HepG2 (cell line): ENCODE measurements at regions of chr4 and their contacts with region 1.

Region 1: DNA sequence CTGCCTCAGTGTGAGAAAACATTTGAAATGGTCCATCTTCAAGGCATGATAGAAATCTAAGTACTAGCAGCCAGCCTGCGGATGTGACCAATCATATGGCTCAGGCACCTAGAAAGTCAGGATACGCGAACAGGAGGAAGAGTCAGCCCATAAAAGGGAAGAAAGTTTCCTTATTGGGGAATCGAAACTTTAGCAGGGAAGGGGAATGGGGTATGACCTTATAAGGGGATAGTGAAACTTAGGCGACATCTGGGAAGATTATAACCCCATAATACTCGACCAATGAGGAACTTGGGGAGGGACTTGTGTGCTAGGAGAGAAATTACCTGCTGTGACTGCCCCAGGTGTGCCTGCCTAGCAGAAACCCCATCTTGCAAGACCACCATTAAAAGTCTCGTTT is 26.2 kb upstream of the PYURF start:
- DNase-seq: no peak
- ATAC-seq: no peak
- H3K4me3 ChIP-seq: no peak overlapping the region
- H3K27ac ChIP-seq: no peak overlapping the region
- H3K4me1 ChIP-seq: no peaks in the 10 kb centered on the region
- H3K27me3 ChIP-seq: no peaks in the 10 kb centered on the region
- CTCF ChIP-seq: no peak
- EP300 ChIP-seq: no peak
- POLR2A ChIP-seq: no peak
- RAD21 ChIP-seq: no peak

Region 2: DNA sequence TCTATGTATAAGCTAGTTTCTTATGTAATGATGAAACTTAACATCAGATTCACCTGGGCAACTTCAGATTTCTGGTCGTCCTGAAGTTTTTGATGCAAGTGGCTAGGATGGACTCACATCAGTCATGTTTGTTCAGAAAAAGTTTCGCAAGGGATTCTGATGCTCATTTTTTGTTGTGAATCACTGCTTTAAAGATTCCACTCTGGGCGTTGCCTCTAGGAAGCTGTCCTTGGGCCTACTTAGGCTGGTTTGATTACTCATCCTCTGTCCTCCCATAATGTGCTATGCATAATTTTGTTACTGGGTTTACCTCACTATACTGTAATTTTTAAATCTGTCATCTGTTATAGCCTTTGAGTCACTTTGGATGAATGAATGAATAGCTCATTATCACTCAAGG is 73.3 kb after region 1 on chr4:
- CTCF ChIA-PET with region 1: no interaction called
- POLR2A ChIA-PET with region 1: no interaction called
- in situ Hi-C with region 1: no loop called
- intact Hi-C with region 1: loop called (anchors 5 kb)
- DNase-seq: peak; percentile 24
- ATAC-seq: no peak
- H3K4me3 ChIP-seq: no peak overlapping the region
- H3K27ac ChIP-seq: no peak overlapping the region
- H3K4me1 ChIP-seq: no peaks in the 10 kb centered on the region
- H3K27me3 ChIP-seq: no peaks in the 10 kb centered on the region
- CTCF ChIP-seq: no peak
- EP300 ChIP-seq: no peak
- POLR2A ChIP-seq: no peak
- RAD21 ChIP-seq: no peak